ENCODE measurements at regions of chr7 and their contacts with region 1.

Region 1: GRCh38 chr7:101602484-101603241 is 26.4 kb downstream of the MYL10 start:
- DNase-seq: peak; percentile 82
- H3K4me3 Mint-ChIP-seq: no peak overlapping the region
- H3K27ac Mint-ChIP-seq: no peak overlapping the region
- H3K4me1 Mint-ChIP-seq: peaks cover 11% of the 10 kb centered on the region
- H3K27me3 Mint-ChIP-seq: no peaks in the 10 kb centered on the region
- CTCF ChIP-seq: peak; percentile 57

Region 2: DNA sequence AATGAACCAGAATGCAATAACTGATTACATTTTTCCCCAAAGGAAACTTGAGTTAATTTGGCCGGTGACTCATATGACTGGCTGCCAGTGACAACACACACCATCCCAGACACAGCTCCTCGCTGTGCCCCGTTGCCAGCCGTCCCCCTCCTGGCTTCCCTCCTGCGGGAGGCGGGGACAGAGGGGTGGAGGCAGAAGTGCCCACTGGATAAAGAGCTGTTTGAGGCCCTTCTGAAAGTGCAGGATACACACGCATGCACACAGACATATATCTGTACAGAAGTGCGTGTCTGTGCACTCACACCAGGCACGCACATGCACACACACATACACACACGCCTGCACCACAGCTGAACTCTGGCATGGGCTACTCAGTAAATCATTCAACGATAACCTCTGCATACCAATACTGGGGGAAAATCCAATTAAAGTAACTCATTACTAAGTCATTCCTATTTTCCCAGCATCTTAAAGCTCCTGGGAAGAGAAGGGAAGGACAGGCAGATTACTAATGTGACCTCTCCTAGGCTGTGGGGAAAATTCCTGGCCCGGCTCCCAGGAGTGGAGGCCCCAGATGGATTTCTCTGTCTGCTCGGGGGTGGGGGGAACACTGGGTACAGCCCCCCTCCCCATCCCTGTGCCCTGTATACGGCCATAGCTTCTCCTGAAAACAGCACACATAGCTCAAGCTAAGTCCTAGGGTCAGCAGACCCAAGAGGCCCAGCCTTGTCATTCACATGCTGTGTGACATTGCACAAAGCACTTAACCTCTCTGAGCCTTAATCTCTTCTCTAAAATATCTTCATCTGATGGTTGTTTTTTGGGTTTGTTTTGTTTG is 78.7 kb after region 1 on chr7:
- CTCF ChIA-PET with region 1: interaction called, 11 read pairs
- intact Hi-C with region 1: loop called (anchors 10 kb)
- DNase-seq: peak; percentile 77
- H3K4me3 Mint-ChIP-seq: peak overlapping the region; percentile 5
- H3K27ac Mint-ChIP-seq: no peak overlapping the region
- H3K4me1 Mint-ChIP-seq: peaks cover 31% of the 10 kb centered on the region
- H3K27me3 Mint-ChIP-seq: no peaks in the 10 kb centered on the region
- CTCF ChIP-seq: no peak

Region 3: GRCh38 chr7:101688183-101688831 is 85.6 kb after region 1 on chr7:
- CTCF ChIA-PET with region 1: interaction called, 4 read pairs
- intact Hi-C with region 1: loop called (anchors 10 kb)
- DNase-seq: peak; percentile 79
- H3K4me3 Mint-ChIP-seq: no peak overlapping the region
- H3K27ac Mint-ChIP-seq: no peak overlapping the region
- H3K4me1 Mint-ChIP-seq: peaks cover 10% of the 10 kb centered on the region
- H3K27me3 Mint-ChIP-seq: no peaks in the 10 kb centered on the region
- CTCF ChIP-seq: peak; percentile 74

Region 4: DNA sequence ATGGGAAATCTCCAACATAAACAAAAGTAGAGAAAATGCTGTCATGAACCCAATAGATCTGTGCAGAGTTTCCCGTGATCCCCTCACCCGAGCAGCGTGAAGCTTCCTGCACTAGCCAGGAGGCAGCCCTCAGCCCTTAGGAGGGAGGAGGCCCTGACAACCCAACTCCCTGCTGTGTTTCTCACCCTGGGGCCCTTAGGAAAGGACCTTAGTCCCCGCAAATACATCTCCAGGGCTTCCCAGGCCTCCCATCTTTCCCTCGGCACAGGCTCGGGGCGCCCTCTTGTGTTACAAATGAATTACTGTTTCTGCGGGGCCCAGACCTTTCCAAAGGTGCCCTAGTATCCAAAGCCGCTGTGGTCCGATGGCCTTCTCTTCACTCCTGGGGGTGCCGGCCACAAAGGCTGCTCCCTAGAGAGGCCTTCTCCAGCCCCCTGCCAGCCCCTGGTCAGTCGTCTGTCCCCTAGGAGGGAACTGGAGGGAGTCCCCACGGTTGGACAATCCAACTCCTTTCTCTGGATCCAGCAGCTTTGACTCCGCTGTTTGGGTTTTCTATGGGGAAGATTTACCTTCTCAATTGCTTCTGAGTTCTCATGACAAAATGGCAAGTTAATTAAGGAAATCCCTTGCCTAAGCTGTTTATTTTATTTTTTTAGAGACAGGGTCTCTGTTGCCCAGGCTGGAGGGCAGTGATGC is 634.1 kb after region 1 on chr7:
- CTCF ChIA-PET with region 1: no interaction called
- intact Hi-C with region 1: loop called (anchors 10 kb)
- DNase-seq: peak; percentile 56
- H3K4me3 Mint-ChIP-seq: no peak overlapping the region
- H3K27ac Mint-ChIP-seq: no peak overlapping the region
- H3K4me1 Mint-ChIP-seq: no peaks in the 10 kb centered on the region
- H3K27me3 Mint-ChIP-seq: no peaks in the 10 kb centered on the region
- CTCF ChIP-seq: peak; percentile 55